ENCODE measurements at regions of chr12 and their contacts with region 1.

Region 1: GRCh38 chr12:8687846-8688601 is 9.8 kb upstream of the RIMKLB start:
- DNase-seq: no peak
- CTCF ChIP-seq: no peak

Region 2: GRCh38 chr12:8860165-8860961 is 172.3 kb after region 1 on chr12:
- in situ Hi-C with region 1: loop called (anchors 10 kb)
- DNase-seq: peak; percentile 65
- CTCF ChIP-seq: peak; percentile 62

Region 3: GRCh38 chr12:8876887-8877286 is 188.9 kb after region 1 on chr12:
- in situ Hi-C with region 1: no loop called
- DNase-seq: no peak
- CTCF ChIP-seq: no peak

Region 4: DNA sequence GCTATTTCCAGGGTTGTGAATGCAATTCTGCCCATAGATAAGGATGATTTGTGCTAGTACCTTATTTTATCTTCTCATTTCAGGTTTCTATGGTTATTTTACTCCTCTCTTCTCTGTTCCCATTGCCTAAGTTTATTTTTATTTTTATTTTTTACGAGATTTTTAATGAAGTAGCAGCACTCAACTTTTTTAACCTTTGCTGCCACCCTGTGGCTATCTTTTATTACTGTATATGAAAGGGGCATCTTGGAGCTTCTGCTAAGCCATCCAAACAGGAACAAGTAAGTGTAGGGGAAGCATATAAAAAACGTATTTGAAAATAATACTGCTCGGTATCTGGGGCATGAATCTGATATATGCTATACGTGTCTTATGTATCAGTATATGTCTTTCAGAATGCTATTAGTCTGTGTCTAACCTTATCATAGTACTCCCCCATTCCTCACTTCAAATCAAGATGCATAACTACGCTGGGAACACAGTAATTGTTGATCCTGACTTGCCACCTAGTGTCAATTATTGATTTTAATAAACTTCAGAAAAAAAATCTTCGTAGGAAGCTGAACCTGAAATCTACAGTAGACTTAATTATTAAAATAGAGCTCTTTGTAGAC is 361.6 kb after region 1 on chr12:
- in situ Hi-C with region 1: loop called (anchors 10 kb)
- DNase-seq: peak; percentile 47
- CTCF ChIP-seq: peak; percentile 17

Measured in GM13976 (cell line).